ENCODE measurements at regions of chr10 and their contacts with region 1.

Region 1: DNA sequence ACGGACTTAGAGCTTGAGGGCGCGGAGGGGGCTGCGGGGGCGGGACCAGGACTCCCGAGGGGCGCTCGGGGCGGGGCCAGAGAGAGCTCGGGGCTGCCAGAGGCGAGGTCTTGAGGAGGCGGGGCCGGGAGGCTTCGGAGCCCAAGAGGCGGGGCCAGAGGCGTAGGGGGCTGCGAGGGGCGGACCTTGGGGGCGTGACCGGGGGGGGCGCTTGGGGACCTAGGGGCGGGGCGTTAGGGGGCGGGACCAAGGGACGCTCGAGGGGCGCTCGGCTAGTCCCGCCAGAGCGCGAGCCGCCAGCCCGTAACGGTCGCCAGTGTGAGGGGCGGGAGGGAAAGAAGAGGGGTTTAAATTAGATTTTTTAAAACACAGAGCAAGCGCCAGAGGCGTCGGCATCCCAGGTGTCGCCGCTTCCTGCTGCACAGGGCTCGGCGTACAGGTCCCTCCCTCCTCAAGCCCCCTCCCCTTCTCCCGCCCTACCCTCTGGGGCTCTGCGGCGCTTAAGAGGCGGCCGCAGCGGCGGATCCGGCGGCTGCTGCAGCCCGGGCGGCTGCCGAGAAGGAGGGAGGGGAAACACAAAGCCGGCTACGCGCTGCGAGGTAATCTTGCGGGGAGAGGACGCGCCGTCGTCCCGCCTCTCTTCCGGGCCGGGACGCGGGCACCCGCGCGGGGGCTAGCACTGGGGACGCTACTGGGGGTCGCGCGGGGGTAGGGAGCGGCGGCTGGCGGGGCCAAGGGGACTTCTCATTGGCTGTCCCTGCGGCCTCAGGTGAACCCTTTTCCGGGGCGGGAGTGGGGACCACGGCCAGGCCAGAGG is at the start of gene ADD3:
- DNase-seq: peak; percentile 90 to 99 (median 95)

Region 2: GRCh38 chr10:109894516-109894915 is 113.4 kb before region 1 on chr10:
- intact Hi-C with region 1: loop called (anchors 10 kb)
- DNase-seq: peak; percentile 43 to 94 (median 58)

Region 3: DNA sequence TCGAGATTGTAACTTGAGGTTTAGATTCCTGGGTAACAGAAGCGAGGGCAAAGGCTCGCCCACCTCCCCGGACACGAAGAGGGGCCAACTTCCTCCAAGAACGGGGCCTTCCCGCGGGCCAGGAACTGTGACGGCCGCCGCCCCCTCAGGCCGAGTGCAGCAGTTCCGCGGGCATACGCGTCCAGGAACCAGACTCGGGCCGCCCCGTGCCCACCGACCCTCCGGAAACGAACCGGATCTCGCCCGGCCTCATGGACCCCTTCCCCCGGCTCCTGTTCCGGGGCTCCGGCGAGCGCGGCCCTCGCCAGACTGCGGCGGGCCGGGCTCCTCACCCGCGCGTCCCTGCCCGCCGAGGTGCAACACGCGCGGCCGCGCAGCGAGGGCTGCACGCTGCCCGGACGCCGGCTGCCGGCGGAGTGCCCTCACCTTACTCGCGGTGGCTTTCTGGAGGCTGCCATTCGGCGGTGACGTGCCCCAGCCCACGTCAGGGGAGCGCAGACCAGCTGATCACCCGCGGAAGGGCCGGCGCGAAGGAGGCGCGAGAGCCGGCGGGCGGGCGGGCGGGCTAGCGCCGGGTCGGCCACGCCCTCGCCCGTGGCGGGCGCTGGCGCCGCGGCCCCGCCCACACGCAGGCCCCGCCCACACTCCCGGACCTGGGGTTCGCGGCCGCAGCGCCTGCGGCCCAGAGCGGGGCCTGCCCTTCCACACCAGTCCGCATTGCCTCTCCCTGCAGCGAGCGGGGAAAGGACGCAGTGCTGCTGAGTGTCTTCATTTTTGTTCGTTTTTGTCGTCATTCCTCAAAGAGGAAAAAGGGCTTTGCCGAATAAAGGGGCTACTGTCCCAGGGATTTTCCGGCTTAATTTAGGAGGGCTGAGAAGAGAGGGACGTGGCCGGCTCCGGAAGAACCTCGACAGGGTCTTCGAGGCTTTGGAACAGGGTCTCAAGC is 84.7 kb before region 1 on chr10 and contains the start of gene XPNPEP1:
- intact Hi-C with region 1: loop called (anchors 5 kb)
- DNase-seq: peak; percentile 79 to 99 (median 88)

Region 4: DNA sequence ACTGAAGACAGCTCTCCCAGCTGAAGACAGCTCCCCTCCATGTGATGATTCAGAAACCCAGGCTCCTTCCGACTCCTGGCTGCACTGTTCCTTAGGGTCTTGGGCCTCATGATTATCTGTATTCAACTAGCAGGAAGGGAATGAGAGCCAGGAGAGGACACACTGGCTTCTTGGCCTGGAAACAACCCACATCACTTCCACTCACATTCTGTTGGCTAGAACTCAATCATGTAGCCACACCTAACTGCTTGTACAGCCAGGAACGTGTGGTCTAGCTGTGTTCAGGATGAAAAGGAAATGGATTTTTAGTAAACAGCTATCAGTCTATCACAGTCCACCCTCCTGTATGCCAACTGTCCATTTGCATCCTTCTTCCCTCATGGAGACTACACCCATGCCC is 54.1 kb before region 1 on chr10:
- intact Hi-C with region 1: no loop called
- DNase-seq: no peak

Region 5: GRCh38 chr10:110101464-110102144 is 93.7 kb after region 1 on chr10:
- intact Hi-C with region 1: no loop called
- DNase-seq: no peak

Measured in posterior cingulate gyrus (tissue), 11 donors.